Right cardiac atrium (tissue), 5 donors: ENCODE measurements at regions of chr12 and their contacts with region 1.

Region 1: DNA sequence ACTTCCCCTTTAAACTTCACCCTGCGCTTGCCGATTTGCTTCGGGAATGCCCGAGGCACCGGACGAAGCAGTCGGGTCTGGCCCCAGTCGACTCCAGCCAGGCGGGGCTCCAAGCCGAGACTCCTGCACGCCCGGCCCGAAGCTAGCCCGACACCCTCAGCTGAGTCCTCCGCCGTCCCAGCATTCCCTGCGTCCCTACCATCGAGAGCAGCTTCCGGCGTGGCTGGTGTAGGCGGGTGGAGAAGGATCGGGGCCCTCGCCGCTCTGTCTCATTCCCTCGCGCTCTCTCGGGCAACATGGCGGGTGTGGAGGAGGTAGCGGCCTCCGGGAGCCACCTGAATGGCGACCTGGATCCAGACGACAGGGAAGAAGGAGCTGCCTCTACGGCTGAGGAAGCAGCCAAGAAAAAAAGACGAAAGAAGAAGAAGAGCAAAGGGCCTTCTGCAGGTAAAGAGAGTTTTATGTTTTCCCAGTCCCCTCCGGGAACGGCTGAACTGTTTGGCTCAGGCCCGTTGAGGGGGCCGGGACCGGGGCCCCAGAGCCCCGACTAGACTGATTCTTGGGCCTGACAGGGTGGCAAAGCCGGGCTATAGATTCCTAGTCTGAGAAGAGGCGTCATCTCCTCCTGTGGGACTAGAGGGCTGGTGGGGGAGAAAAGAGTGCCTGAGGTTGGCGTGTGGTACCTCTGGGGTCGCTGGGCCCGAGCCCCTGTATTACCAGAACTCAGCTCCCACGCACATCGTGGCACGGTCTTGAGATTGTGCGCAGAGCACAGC is at the start of gene METAP2:
- DNase-seq: peak; percentile 97 to 98 (median 98)
- ATAC-seq: peak; percentile 100
- H3K4me3 ChIP-seq: peak within 1 kb of the TSS; percentile 93
- H3K27ac ChIP-seq: peak within 1 kb of the TSS; percentile 74
- H3K4me1 ChIP-seq: no peaks in the 10 kb centered on the region
- H3K27me3 ChIP-seq: no peaks in the 10 kb centered on the region
- total RNA-seq, gene METAP2: 57.6 to 70.3 (median 67.2) TPM

Region 2: DNA sequence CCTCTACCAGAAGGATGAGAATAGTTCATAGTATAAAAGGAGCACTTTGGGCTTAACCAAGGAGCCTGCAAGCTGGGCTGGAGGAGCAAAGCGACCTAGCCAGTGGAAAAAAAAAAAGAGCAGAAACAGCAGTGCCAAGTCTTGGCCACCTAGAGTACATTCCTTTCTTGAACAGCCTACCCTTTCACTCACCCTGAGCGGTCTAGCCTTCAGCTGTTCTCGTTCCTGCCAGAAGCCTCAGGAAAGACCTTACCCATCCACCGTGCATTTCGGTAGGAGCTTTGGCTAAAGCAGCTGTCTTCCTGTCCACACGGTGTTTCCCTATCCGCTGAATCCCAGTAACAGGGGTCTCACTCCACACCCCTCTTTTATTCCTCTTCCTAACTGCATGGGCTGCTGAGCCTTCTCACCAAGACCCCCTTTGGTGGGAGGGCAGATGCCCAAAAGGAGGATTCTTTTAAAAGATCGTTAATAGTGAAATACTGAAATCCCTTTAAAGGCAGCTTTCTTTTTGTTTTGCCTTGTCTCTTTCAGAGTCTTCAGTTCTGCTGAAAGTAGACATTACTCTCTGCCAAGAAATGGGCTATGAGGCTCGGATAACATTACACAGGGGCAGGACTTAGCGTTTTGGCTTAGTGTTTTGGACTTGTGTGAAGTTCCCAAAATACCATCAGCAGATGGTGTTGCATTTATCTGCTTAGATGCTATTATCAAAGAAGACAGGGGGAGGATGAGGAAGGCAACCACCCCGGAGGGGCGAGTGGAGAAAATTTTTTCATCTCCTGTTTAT is 88.6 kb before region 1 on chr12:
- intact Hi-C with region 1: loop called in 1 of 4 experiments (anchors 5 kb)
- DNase-seq: no peak
- ATAC-seq: peak; percentile 92 to 95
- H3K4me3 ChIP-seq: peak overlapping the region; percentile 40
- H3K27ac ChIP-seq: peak overlapping the region; percentile 93
- H3K4me1 ChIP-seq: peaks cover 4% of the 10 kb centered on the region
- H3K27me3 ChIP-seq: no peaks in the 10 kb centered on the region